H1 (cell line): ENCODE measurements at regions of chr7 and their contacts with region 1.

Region 1: GRCh38 chr7:94289071-94289470 is 105.6 kb upstream of the COL1A2 start:
- DNase-seq: peak; percentile 57 to 59
- H3K4me3 ChIP-seq: no peak overlapping the region
- H3K27ac ChIP-seq: no peak overlapping the region
- H3K4me1 ChIP-seq: no peaks in the 10 kb centered on the region
- H3K27me3 ChIP-seq: no peaks in the 10 kb centered on the region
- CTCF ChIP-seq: peak; percentile 70 to 97 (median 97)
- EP300 ChIP-seq: no peak
- POLR2A ChIP-seq: no peak
- RAD21 ChIP-seq: peak; percentile 100

Region 2: DNA sequence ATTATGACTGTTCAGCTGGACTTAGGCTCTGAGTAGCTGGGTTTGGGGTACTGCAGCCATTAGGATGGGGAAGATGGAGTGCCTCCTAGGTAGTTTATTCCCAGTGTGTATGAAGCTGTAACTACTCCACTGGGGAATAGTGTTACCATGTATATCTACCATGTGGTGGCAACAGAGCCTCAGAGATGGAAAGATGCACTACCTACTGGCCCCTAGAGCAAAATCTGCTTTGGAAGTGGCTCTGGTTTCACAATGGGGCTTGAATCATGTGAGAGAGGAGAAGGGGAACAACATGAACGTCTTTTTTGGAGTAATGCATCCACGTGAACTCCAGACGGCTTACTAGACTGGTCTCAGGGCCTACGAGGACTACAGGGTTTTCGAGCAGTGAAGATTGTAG is 881.8 kb before region 1 on chr7:
- CTCF ChIA-PET with region 1: no interaction called
- POLR2A ChIA-PET with region 1: no interaction called
- DNase-seq: no peak
- H3K4me3 ChIP-seq: no peak overlapping the region
- H3K27ac ChIP-seq: no peak overlapping the region
- H3K4me1 ChIP-seq: no peaks in the 10 kb centered on the region
- H3K27me3 ChIP-seq: no peaks in the 10 kb centered on the region; a peak in 1 of 7 replicates
- CTCF ChIP-seq: peak in 1 of 3 experiments; percentile 15; a peak in 1 of 4 replicates
- EP300 ChIP-seq: no peak
- POLR2A ChIP-seq: no peak
- RAD21 ChIP-seq: peak; percentile 44 to 60

Region 3: GRCh38 chr7:94190599-94191061 is 98.4 kb before region 1 on chr7:
- CTCF ChIA-PET with region 1: no interaction called
- POLR2A ChIA-PET with region 1: no interaction called
- DNase-seq: no peak
- H3K4me3 ChIP-seq: no peak overlapping the region
- H3K27ac ChIP-seq: no peak overlapping the region
- H3K4me1 ChIP-seq: peaks cover 0 to 4% (median 2%) of the 10 kb centered on the region in 4 experiments; a peak in 2 of 7 replicates
- H3K27me3 ChIP-seq: no peaks in the 10 kb centered on the region
- CTCF ChIP-seq: no peak
- EP300 ChIP-seq: no peak
- POLR2A ChIP-seq: no peak
- RAD21 ChIP-seq: no peak

Region 4: DNA sequence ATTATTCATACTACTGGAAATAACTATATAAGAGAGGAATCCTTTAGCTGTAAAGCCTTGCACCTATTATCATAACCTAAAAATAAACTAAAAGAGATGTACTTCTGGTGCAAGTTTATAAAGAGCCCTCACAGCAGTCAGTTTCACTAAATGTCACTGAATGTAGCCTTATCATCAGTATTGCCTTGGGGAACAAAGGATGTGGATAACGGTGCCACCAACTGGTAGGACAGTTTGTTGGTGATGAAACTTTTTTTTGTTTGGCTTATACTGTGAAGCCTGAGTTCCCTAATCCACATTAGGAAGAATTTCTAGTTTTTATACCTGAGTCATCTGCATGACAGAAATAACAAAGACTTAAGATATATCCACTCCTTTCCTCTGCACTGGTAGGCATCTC is 12.3 kb before region 1 on chr7:
- CTCF ChIA-PET with region 1: interaction called, 18 read pairs
- POLR2A ChIA-PET with region 1: no interaction called
- DNase-seq: no peak
- H3K4me3 ChIP-seq: no peak overlapping the region
- H3K27ac ChIP-seq: no peak overlapping the region
- H3K4me1 ChIP-seq: no peaks in the 10 kb centered on the region
- H3K27me3 ChIP-seq: no peaks in the 10 kb centered on the region
- CTCF ChIP-seq: peak in 2 of 3 experiments; percentile 48 to 58; a peak in 3 of 4 replicates
- EP300 ChIP-seq: no peak
- POLR2A ChIP-seq: no peak
- RAD21 ChIP-seq: peak; percentile 77 to 80

Region 5: GRCh38 chr7:94324380-94325117 is 35.5 kb after region 1 on chr7:
- CTCF ChIA-PET with region 1: no interaction called
- POLR2A ChIA-PET with region 1: no interaction called
- DNase-seq: no peak
- H3K4me3 ChIP-seq: no peak overlapping the region
- H3K27ac ChIP-seq: no peak overlapping the region
- H3K4me1 ChIP-seq: no peaks in the 10 kb centered on the region
- H3K27me3 ChIP-seq: no peaks in the 10 kb centered on the region
- CTCF ChIP-seq: no peak
- EP300 ChIP-seq: no peak
- POLR2A ChIP-seq: no peak
- RAD21 ChIP-seq: no peak

Region 6: DNA sequence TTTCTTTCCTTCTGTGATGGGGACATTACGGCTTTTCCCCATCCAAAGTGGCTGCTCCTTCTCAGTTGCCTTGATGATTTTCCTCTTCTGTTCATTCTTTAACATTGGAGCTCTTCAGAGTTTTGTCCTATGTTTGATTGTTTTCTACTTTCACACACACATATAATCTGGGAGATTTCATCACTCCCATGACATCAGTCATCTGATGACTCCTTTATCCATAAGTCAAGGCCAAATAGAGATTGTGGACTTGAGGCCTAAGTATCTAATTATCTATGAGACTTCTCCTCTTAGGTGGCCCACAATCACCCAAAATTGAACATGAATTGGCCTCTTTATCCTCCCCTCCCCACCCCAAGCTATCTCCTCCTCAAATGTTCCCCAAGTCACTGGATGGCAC is 100.3 kb after region 1 on chr7:
- CTCF ChIA-PET with region 1: interaction called, 372 read pairs
- POLR2A ChIA-PET with region 1: interaction called, 20 read pairs
- DNase-seq: no peak
- H3K4me3 ChIP-seq: no peak overlapping the region
- H3K27ac ChIP-seq: no peak overlapping the region
- H3K4me1 ChIP-seq: peaks cover 8 to 24% (median 19%) of the 10 kb centered on the region in 4 experiments
- H3K27me3 ChIP-seq: peaks cover 0 to 3% (median 0%) of the 10 kb centered on the region in 4 experiments; a peak in 3 of 7 replicates
- CTCF ChIP-seq: no peak
- EP300 ChIP-seq: no peak
- POLR2A ChIP-seq: no peak
- RAD21 ChIP-seq: no peak

Region 7: GRCh38 chr7:94410413-94411187 is 121.5 kb after region 1 on chr7:
- CTCF ChIA-PET with region 1: interaction called, 10 read pairs
- POLR2A ChIA-PET with region 1: no interaction called
- DNase-seq: no peak
- H3K4me3 ChIP-seq: no peak overlapping the region
- H3K27ac ChIP-seq: no peak overlapping the region
- H3K4me1 ChIP-seq: peaks cover 0 to 5% (median 0%) of the 10 kb centered on the region in 4 experiments; a peak in 1 of 7 replicates
- H3K27me3 ChIP-seq: no peaks in the 10 kb centered on the region
- CTCF ChIP-seq: no peak
- EP300 ChIP-seq: no peak
- POLR2A ChIP-seq: no peak
- RAD21 ChIP-seq: no peak

Region 8: GRCh38 chr7:95028683-95029082 is 739.6 kb after region 1 on chr7:
- CTCF ChIA-PET with region 1: no interaction called
- POLR2A ChIA-PET with region 1: no interaction called
- DNase-seq: no peak
- H3K4me3 ChIP-seq: no peak overlapping the region
- H3K27ac ChIP-seq: no peak overlapping the region
- H3K4me1 ChIP-seq: no peaks in the 10 kb centered on the region
- H3K27me3 ChIP-seq: no peaks in the 10 kb centered on the region
- CTCF ChIP-seq: no peak
- EP300 ChIP-seq: no peak
- POLR2A ChIP-seq: no peak
- RAD21 ChIP-seq: no peak